ENCODE measurements at regions of chr20 and their contacts with region 1.

Region 1: GRCh38 chr20:58907399-58908137 is 55.1 kb downstream of the GNAS start:
- DNase-seq: peak; percentile 58
- H3K4me3 Mint-ChIP-seq: peak overlapping the region; percentile 5
- H3K27ac Mint-ChIP-seq: peak overlapping the region; percentile 58
- H3K4me1 Mint-ChIP-seq: peaks cover 17% of the 10 kb centered on the region
- H3K27me3 Mint-ChIP-seq: no peaks in the 10 kb centered on the region
- CTCF ChIP-seq: no peak

Region 2: DNA sequence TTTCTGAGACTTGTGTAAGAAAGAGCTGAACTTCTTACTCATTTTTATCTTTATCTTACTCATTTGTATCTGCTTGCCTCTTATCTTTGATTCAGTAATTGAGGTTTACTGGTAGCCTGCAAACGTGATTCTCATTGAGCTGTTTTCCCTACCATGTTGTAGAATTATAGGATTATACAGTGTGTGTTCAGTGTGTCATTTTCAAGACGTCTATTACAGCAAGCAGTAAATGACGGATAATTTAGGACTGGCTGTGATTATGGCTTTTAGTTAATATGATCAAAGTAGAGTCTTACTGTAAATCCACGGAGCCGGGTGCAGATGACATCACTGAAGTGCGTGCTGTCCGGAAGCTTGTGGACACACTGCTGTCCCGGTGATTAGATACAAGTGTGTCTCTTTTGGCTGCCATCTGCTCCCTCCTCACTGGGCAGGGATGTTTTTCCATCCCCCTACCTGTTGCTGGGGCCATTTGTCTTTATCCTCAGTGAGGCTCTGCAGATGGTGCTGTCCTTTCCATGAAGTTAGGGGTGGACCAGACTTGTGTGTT is 79.5 kb after region 1 on chr20:
- CTCF ChIA-PET with region 1: interaction called, 5 read pairs
- intact Hi-C with region 1: loop called (anchors 5 kb)
- DNase-seq: no peak
- H3K4me3 Mint-ChIP-seq: no peak overlapping the region
- H3K27ac Mint-ChIP-seq: no peak overlapping the region
- H3K4me1 Mint-ChIP-seq: peaks cover 25% of the 10 kb centered on the region
- H3K27me3 Mint-ChIP-seq: no peaks in the 10 kb centered on the region
- CTCF ChIP-seq: no peak

Measured in Calu3 (cell line).